ENCODE measurements at regions of chr4 and their contacts with region 1.

Region 1: DNA sequence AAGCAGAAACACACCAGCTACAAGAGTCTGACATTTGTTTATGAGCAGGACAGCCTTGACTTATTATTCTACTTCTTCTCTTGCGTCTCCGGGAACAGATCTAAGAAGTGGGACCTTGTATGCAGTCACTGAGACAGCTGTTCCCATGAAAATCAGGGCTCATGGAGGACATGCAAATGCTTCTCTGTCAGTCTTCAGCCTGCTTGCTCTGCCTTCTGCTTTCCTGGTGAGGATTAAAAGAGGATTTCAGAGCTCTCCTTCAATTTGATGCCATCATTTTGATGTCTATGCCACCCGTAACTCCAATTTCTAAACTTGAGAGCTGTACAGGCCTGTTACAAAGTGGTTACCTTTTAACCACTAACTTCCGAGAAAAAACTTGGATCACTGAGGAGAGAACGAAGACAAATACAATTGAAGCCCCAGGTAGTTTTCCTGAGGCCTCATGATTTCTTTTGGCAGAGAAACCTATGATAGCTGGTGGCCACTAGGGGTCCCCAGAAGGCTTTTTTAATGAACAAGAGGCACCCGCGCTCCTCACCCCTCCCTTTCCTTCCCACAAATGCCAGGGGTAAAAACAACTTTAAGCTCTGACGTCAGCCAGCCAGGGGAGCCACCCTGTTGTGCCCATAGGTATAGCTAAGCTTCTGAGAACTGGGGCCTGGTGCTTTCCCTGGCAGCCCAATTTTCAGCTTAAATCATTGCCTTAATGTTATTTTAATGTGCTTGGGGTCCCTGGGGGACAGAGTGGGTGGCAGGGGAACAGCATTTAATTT is 97.0 kb downstream of the DDIT4L start:
- DNase-seq: peak; percentile 79
- H3K4me3 Mint-ChIP-seq: no peak overlapping the region
- H3K27ac Mint-ChIP-seq: peak overlapping the region; percentile 84
- H3K4me1 Mint-ChIP-seq: peaks cover 41% of the 10 kb centered on the region
- H3K27me3 Mint-ChIP-seq: no peaks in the 10 kb centered on the region

Region 2: GRCh38 chr4:99563310-99564186 is 529.7 kb before region 1 on chr4 and contains the start of gene TRMT10A:
- intact Hi-C with region 1: loop called (anchors 5 kb)
- DNase-seq: peak; percentile 93
- H3K4me3 Mint-ChIP-seq: peak within 1 kb of the TSS; percentile 92
- H3K27ac Mint-ChIP-seq: peak within 1 kb of the TSS; percentile 95
- H3K4me1 Mint-ChIP-seq: peaks cover 12% of the 10 kb centered on the region
- H3K27me3 Mint-ChIP-seq: peaks cover 16% of the 10 kb centered on the region
- total RNA-seq, gene TRMT10A: 7.9 and 8.4 TPM in 2 replicates

Region 3: DNA sequence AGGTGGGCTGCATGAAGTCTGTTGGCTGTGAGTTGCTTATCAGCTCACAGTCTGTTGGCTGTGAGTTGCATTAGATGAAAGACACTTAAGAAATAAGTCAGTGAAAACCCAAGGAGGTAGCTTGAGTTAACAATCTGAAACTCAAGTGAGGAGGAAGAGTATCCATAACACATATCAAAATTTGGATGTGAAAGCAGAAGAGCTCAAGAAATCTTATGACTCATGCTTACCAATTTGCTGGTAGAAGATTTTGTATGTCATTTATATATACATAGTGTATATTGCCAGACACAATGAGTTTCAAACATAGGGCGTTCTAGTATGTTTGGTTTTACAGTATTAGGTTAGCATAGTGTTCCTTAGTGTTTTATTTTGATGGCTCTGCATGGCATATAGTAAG is 10.4 kb before region 1 on chr4:
- intact Hi-C with region 1: loop called (anchors 1 kb)
- DNase-seq: no peak
- H3K4me3 Mint-ChIP-seq: no peak overlapping the region
- H3K27ac Mint-ChIP-seq: peak overlapping the region; percentile 68
- H3K4me1 Mint-ChIP-seq: peaks cover 26% of the 10 kb centered on the region
- H3K27me3 Mint-ChIP-seq: no peaks in the 10 kb centered on the region

Region 4: DNA sequence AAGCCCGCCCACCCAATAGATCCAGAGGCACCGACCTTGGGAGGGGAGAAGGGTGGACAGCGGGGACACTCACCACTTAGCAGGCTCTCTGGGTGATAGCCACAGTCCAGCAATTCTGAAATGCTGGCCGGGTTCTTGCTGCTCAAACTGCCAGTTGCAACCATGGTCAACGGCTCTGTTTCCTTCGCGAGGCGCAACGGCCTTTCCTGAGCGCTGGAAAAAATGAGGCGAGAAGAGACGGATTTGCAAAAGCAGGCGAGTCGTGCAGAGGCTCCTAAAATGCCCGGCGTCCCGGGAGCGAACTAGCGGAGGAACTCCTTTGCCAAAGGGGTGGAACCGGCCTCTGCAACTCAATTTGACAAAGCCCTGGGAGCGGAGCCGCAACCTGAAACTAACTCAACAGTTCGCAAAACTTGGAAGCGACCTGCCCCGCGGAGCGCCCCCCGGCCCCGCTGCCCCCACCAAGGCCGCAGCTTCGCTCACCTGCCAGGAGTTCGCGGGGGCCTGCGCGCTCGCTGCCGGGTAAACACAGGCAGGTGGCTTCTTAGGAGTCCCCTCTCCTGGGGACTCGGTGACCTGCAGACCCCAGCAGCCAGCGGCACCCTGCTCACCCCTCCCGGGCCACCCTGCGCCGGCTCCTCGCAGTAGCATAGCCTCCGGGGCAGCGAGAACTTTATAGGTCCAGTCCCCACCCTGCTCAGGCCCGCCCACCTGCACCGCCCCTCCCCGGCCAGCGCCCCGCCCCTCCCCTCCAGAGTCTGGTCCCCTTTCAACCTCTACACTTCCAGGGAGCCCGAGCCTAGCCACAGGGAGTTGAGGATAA is 96.8 kb after region 1 on chr4 and contains the start of gene DDIT4L:
- intact Hi-C with region 1: loop called (anchors 5 kb)
- DNase-seq: no peak
- H3K4me3 Mint-ChIP-seq: peak within 1 kb of the TSS; percentile 78
- H3K27ac Mint-ChIP-seq: no peak within 1 kb of the TSS
- H3K4me1 Mint-ChIP-seq: peaks cover 23% of the 10 kb centered on the region
- H3K27me3 Mint-ChIP-seq: peaks cover 36% of the 10 kb centered on the region
- total RNA-seq, gene DDIT4L: 3.3 TPM in 2 replicates

Region 5: DNA sequence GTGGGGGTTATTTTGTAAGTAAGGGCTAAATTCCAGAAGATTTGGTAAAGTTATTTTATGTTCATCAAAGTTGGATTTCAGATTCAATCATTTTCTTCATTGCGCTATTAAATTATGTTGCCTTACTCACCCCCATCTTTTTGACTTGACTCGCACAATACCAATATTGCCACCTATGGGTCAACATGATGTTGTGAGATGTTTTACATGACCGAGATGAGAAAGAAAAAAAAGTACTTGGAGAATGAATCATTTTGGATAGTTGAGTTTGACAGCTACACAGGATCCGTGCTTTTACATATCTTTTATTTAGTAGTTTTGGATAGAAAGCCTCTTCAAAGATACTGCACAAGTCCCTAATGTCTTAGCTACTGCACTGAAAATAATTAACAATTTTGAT is 648.8 kb after region 1 on chr4:
- intact Hi-C with region 1: loop called (anchors 1 kb)
- DNase-seq: no peak
- H3K4me3 Mint-ChIP-seq: no peak overlapping the region
- H3K27ac Mint-ChIP-seq: no peak overlapping the region
- H3K4me1 Mint-ChIP-seq: no peaks in the 10 kb centered on the region
- H3K27me3 Mint-ChIP-seq: no peaks in the 10 kb centered on the region

Region 6: GRCh38 chr4:101103381-101104142 is 1010.3 kb after region 1 on chr4:
- intact Hi-C with region 1: loop called (anchors 10 kb)
- DNase-seq: no peak
- H3K4me3 Mint-ChIP-seq: peak overlapping the region; percentile 11
- H3K27ac Mint-ChIP-seq: peak overlapping the region; percentile 52
- H3K4me1 Mint-ChIP-seq: peaks cover 25% of the 10 kb centered on the region
- H3K27me3 Mint-ChIP-seq: no peaks in the 10 kb centered on the region

Region 7: DNA sequence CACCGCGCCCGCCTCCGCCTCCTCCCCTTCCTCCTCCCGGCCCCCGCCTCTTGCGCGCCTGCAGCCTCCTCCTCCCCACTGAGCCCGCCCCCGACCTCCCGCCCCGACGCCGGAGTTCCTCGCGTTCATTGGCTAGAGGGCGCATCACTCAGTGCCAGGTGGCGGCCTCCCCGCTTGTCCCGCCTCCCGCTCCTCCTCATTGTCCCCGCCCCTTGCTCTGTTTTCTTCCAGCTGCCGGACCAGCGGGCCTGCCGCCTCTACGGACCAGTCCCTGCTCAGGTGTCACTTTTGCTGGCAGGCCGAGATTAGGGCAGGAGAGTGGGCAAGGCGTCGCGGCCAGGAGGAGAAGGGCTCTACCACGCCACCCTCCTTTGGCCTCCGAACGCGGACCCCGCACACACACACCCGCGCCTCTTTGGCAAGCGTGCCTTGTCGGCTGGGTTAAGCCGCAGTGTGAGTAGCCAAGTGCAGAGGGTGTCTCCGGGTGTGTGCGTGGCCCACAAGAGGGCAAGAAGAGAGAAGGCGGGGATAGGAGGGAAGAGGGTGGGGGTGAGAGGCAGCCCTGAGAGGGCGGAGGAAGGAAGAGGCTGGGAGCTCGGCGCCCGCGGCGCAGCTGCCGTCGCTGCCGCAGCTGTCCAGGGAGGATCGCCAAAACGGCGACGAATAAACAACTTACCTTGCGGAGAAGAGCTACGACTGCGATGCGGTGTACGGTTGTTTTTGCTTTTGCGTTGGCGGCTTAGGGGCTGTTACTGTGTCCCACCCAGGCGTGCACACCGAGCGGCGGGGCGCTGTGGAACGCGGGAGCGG is 1254.5 kb after region 1 on chr4:
- intact Hi-C with region 1: loop called (anchors 5 kb)
- DNase-seq: peak; percentile 96
- H3K4me3 Mint-ChIP-seq: peak overlapping the region; percentile 87
- H3K27ac Mint-ChIP-seq: peak overlapping the region; percentile 72
- H3K4me1 Mint-ChIP-seq: peaks cover 31% of the 10 kb centered on the region
- H3K27me3 Mint-ChIP-seq: peaks cover 41% of the 10 kb centered on the region

Measured in activated T-helper 2 cell treated with anti-CD3 and anti-CD28 coated beads, Interferon-gamma antibody, Interleukin-2, Interleukin-4, amounts not matched to agents 10 μg/mL and 5 μg/mL and 100 μg/mL, durations not matched to agents 14 hours and 24 hours and 36 hours (primary cell).